Prostate gland (tissue), 2 donors: ENCODE measurements at regions of chr5 and their contacts with region 1.

Region 1: DNA sequence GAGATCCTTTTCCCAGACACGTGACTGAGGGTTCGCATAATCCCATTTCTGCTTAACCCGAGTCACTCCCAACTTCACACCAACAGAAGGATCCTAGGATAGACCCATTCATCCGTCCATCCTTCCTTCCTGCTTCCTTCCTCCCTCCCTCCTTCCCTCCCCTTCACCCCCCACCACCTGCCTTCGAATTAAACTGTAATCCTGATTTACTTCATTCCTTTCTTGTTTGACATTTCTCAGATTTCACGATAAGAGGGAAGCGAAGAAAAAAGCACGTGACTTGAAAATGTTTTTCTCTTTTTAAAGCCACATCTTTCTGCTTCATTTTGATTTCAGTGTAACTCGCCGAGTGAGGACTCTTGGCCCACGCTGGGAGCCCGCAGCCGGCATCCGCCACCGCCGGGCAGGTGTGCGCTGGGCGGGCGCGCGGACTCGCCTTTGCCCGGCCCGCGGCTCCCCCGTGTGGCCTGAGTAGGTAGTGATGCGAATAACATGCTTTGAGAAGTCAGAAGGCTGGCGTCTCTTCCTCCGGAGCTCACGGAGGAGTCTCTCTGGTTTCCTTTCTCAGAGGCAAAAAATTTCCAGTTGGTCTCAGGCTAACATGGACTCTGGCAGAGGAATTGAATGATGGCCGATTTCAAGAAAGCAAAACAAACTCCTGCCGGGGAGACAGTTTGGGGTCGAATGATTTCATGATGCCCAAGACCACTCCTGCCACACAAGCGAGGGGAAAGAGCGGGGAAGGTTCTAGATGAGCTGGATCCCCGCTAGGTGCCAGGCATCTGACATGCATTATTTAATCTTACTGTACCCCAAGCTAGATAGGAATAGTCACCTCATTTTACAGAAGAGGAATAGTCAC is 117.7 kb downstream of the SLC12A2 start:
- DNase-seq: peak; percentile 87
- H3K4me3 ChIP-seq: peak overlapping the region in 1 of 2 donors; percentile 14
- H3K27ac ChIP-seq: peak overlapping the region; percentile 6 to 23
- H3K4me1 ChIP-seq: no peaks in the 10 kb centered on the region
- H3K27me3 ChIP-seq: no peaks in the 10 kb centered on the region
- CTCF ChIP-seq: peak; percentile 81 to 96 (median 93)
- POLR2A ChIP-seq: no peak

Region 2: DNA sequence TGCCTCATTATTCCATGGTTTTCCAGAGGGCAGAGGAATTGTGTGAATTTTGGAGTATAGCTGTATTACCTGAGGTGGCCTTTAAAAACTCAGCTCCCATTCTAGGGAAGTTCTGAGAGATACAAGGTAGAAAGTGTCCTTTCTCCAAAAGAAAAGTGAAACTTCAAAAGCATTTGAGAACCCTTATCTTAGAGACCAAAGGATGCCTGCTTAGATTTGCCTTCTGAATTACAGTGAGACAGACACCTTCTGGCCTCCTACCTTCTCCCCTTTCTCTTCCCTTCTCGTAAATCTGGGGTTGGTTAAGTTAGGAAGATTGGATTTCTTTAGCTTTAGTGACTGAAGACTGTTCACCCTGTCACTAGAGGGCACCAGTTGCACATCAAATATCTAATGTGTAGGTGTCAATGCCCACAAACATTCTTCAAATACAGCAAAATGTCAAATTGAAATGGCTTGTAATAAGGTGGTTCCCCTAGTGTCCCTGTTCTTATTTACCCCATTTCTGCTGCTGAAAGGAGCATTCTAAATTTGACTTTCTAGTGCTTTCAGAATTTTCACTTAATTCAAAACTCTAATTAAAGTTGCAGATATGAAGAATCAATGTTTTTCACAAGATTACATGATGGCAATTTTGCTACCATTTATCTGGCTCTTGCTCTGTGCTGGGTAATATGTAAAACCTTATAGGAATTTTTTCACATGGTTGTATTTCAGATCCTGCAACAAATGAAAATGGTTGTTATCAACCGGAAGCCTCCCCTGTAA is 637.1 kb before region 1 on chr5:
- intact Hi-C with region 1: loop called (anchors 1 kb)
- DNase-seq: peak; percentile 60
- H3K4me3 ChIP-seq: no peak overlapping the region
- H3K27ac ChIP-seq: no peak overlapping the region
- H3K4me1 ChIP-seq: no peaks in the 10 kb centered on the region
- H3K27me3 ChIP-seq: no peaks in the 10 kb centered on the region
- CTCF ChIP-seq: peak in 3 of 4 experiments; percentile 66 to 84 (median 79)
- POLR2A ChIP-seq: no peak

Region 3: DNA sequence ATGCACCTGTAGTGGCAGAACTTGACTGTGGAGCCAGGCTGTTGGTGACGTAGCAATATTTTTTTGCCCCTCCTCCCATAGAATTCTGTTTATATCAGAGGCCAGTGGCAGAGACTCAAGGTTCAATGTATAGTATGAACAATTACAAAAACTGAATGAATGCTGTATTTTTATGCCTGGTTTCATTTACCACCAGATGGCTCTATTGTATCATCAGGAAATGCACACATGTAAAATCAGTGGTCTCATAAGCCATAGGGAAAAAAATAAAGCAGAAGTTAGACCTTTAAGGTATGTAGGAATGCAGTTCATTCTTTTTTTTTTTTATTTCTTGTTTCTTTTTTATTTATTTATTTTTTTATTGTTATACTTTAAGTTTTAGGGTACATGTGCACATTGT is 454.5 kb before region 1 on chr5:
- intact Hi-C with region 1: loop called (anchors 5 kb)
- DNase-seq: no peak
- H3K4me3 ChIP-seq: no peak overlapping the region
- H3K27ac ChIP-seq: no peak overlapping the region
- H3K4me1 ChIP-seq: no peaks in the 10 kb centered on the region
- H3K27me3 ChIP-seq: no peaks in the 10 kb centered on the region
- CTCF ChIP-seq: peak in 3 of 4 experiments; percentile 19 to 63 (median 57)
- POLR2A ChIP-seq: no peak

Region 4: GRCh38 chr5:127875235-127876021 is 325.9 kb before region 1 on chr5:
- intact Hi-C with region 1: loop called (anchors 10 kb)
- DNase-seq: peak; percentile 27
- H3K4me3 ChIP-seq: no peak overlapping the region
- H3K27ac ChIP-seq: no peak overlapping the region
- H3K4me1 ChIP-seq: no peaks in the 10 kb centered on the region
- H3K27me3 ChIP-seq: no peaks in the 10 kb centered on the region
- CTCF ChIP-seq: peak in 1 of 4 experiments; percentile 29
- POLR2A ChIP-seq: no peak

Region 5: GRCh38 chr5:128121655-128122054 is 79.6 kb before region 1 on chr5:
- intact Hi-C with region 1: no loop called
- DNase-seq: peak; percentile 63
- H3K4me3 ChIP-seq: no peak overlapping the region
- H3K27ac ChIP-seq: no peak overlapping the region
- H3K4me1 ChIP-seq: no peaks in the 10 kb centered on the region
- H3K27me3 ChIP-seq: no peaks in the 10 kb centered on the region
- CTCF ChIP-seq: no peak
- POLR2A ChIP-seq: no peak

Region 6: DNA sequence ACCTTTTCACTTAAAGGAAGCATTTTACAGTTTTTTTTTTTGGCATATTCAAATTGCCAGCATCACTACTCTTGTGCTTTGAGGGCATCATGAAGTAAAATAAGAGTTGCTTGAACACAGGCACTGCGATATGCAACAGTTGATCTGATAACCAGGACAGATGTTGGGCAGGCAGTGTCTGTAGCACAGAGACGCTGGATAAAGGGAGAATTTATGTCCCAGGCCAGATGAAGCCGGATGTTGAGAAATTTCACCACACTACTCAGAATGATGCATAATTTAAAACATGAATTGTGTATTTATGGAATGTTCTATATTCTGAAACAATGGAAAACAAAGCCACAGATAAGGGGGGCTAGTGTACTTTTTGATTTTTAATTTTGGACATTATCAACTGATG is 46.4 kb before region 1 on chr5:
- intact Hi-C with region 1: no loop called
- DNase-seq: no peak
- H3K4me3 ChIP-seq: no peak overlapping the region
- H3K27ac ChIP-seq: no peak overlapping the region
- H3K4me1 ChIP-seq: no peaks in the 10 kb centered on the region
- H3K27me3 ChIP-seq: no peaks in the 10 kb centered on the region
- CTCF ChIP-seq: no peak
- POLR2A ChIP-seq: no peak

Region 7: DNA sequence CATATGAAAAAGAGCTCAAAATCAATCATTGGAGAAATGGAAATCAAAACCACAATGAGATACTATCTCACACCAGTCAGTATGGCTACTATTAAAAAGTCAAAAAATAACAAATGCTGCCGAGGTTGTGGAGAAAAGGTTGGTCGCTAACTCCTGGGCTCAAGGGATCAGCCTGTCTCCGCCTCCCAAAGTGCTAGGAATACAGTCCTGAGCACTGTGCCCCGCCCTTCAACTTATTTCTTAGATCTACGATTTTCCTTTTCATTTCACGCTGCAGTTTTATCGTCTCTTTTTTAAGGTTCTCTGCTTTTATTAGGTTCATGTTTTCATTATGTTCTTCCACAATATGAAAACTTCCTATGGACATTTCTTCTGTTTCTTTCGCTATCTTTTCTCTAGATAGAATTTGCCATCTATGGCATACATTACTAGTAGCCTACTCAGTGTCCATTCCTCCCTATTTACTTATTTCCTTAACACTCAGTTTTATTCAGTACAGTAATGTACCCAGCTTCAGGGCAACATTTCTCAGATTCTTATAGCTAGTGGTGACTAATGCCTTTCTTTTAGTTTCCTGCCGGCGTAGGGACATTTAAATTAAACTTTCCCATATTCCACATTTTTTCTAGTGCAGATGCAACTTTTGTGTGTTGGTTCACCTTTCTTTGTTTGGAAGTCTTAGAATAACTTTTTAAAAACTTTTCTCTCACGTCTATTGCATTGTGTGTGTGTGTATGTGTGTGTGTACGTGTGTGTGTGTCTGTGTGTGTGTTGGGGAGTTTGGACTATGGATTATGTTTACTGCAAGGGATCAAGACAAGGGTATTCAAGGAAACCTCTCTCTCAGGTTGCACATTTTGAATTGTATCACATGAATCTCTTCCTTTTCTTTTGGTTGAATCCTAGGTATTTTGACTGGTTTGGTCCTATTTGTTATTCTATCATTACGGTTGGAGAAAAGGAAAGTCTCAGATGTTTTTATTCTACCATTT is 358.3 kb after region 1 on chr5:
- intact Hi-C with region 1: no loop called
- DNase-seq: no peak
- H3K4me3 ChIP-seq: no peak overlapping the region
- H3K27ac ChIP-seq: no peak overlapping the region
- H3K4me1 ChIP-seq: no peaks in the 10 kb centered on the region
- H3K27me3 ChIP-seq: no peaks in the 10 kb centered on the region
- CTCF ChIP-seq: no peak
- POLR2A ChIP-seq: no peak